ENCODE measurements at regions of chr4 and their contacts with region 1.

Region 1: GRCh38 chr4:119652998-119653397 is 24.4 kb upstream of the PDE5A start:
- DNase-seq: no peak
- H3K4me3 ChIP-seq: no peak overlapping the region
- CTCF ChIP-seq: no peak
- POLR2A ChIP-seq: no peak

Region 2: DNA sequence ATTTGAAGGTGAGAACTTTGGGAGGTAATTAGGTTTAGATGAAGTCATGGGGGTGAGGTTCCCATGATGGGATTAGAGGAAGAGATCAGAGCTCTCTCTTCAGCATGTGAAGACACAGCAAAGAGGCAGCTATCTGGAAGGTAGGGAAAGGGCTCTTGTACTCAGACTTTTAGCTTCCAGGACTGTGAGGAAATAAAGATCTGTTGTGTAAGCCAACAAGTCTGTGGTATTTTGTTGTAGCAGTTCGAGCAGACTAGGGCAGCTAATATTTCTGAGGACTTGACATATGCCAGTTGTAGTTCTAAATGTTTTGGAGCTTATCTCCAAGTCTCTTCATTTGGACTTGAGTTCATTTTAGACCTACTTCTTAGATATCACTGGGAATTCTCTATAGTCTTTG is 112.9 kb after region 1 on chr4:
- intact Hi-C with region 1: no loop called
- DNase-seq: no peak
- H3K4me3 ChIP-seq: no peak overlapping the region
- CTCF ChIP-seq: no peak
- POLR2A ChIP-seq: no peak

Region 3: GRCh38 chr4:121108557-121108956 is 1455.6 kb after region 1 on chr4:
- intact Hi-C with region 1: no loop called
- DNase-seq: no peak
- H3K4me3 ChIP-seq: no peak overlapping the region
- CTCF ChIP-seq: no peak
- POLR2A ChIP-seq: no peak

Region 4: DNA sequence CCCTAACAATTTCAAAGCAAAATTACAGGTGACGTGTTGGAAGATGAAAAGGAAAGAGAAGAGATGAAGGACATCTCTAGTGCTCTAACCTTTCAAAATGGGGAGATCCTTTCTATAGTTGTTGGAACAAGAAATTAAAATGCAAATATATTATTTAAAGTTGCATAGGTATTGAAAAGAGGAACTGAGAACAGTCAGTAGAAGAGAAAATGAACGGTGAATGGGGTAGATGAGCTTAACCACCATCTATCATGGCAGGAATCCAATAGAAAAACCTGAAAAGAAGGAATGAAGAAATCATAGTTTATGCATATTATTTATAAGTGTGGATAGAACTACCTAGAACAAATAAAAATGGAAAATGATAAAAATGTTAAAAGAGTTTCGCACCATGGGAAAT is 2001.7 kb after region 1 on chr4:
- intact Hi-C with region 1: loop called (anchors 5 kb)
- DNase-seq: no peak
- H3K4me3 ChIP-seq: no peak overlapping the region
- CTCF ChIP-seq: no peak
- POLR2A ChIP-seq: no peak